A673 (cell line): ENCODE measurements at regions of chr5 and their contacts with region 1.

Region 1: DNA sequence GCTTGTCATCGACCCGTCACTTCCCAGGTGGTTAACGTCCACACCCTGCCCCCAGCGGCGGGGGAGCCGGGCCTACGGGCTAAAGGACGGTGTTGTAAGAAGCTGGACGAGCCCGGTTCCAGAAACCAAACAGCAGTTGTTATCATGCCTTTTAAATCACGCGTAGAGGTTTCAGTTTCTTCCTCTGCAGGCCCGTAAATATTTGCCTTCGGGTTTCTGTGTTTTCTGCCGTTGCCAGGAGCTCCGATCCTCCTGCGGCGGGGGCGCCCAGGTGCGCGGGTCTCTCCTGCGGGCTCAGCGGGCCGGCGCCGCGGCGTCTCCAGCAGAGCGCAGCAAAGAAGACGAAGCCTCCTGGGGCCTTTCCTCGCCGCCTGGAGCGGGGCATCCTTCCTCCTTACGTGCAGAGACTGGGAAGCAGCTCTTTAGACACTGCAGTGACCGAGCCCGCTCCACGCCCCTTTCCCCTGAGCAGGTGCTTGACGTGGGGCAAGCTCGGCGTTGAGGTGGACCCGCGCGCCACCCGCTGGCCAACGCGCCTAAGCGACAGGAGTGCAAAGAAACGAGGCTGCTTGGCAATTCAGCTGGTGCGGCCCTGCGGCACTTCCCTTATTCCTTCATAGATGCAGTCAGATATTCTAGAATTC is 21.8 kb upstream of the TTC1 start:
- DNase-seq: peak; percentile 56
- H3K4me3 ChIP-seq: peak overlapping the region; percentile 39
- H3K27ac ChIP-seq: no peak overlapping the region
- H3K4me1 ChIP-seq: no peaks in the 10 kb centered on the region
- H3K27me3 ChIP-seq: peaks cover 33% of the 10 kb centered on the region
- CTCF ChIP-seq: peak; percentile 70

Region 2: GRCh38 chr5:159444441-159445082 is 542.6 kb before region 1 on chr5:
- CTCF ChIA-PET with region 1: interaction called, 3 read pairs
- POLR2A ChIA-PET with region 1: no interaction called
- intact Hi-C with region 1: loop called (anchors 1 kb)
- DNase-seq: peak; percentile 51
- H3K4me3 ChIP-seq: no peak overlapping the region
- H3K27ac ChIP-seq: no peak overlapping the region
- H3K4me1 ChIP-seq: no peaks in the 10 kb centered on the region
- H3K27me3 ChIP-seq: no peaks in the 10 kb centered on the region
- CTCF ChIP-seq: peak; percentile 40; the same call in 1 of the 2 replicates

Region 3: GRCh38 chr5:159515909-159516415 is 471.2 kb before region 1 on chr5:
- CTCF ChIA-PET with region 1: no interaction called
- POLR2A ChIA-PET with region 1: no interaction called
- intact Hi-C with region 1: loop called (anchors 10 kb)
- DNase-seq: peak; percentile 48
- H3K4me3 ChIP-seq: no peak overlapping the region
- H3K27ac ChIP-seq: no peak overlapping the region
- H3K4me1 ChIP-seq: no peaks in the 10 kb centered on the region
- H3K27me3 ChIP-seq: no peaks in the 10 kb centered on the region
- CTCF ChIP-seq: peak; percentile 82

Region 4: DNA sequence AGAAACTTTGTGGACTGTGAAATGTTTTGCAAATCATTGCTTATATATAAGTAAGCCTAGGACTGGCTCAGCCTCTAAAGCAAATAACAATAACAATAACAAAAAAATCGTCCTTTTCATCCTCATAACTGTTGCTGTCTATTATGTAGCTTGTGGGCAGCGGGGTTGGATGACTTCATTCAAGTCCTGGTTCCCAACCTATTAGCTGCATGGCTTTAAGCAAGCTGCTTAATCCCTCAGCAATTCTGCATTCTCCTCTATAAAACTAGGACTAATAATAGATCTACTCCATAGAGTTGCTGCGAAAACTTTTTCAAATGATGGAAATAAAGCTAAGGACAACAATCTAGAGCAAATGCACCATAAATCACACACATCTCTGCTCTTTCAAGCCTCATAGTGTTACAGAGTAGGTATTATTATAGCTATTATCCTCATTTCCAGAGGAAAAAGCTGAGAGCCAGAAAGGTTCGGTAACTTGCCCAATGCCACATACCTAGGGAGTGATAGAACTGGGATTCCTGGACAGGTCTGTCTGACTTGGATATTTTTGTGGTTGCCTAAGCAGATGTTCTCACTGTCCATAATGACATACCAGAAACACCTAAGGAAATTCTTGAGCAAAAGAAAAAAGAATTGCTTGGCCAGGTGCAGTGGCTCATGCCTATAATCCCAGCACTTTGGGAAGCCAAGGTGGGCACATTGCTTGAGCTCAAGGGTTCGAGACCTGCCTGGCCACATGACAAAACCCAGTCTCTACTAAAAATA is 169.7 kb before region 1 on chr5:
- CTCF ChIA-PET with region 1: no interaction called
- POLR2A ChIA-PET with region 1: no interaction called
- intact Hi-C with region 1: no loop called
- DNase-seq: no peak
- H3K4me3 ChIP-seq: no peak overlapping the region
- H3K27ac ChIP-seq: no peak overlapping the region
- H3K4me1 ChIP-seq: no peaks in the 10 kb centered on the region
- H3K27me3 ChIP-seq: peaks cover 2% of the 10 kb centered on the region
- CTCF ChIP-seq: no peak

Region 5: GRCh38 chr5:159874263-159874662 is 112.9 kb before region 1 on chr5:
- CTCF ChIA-PET with region 1: no interaction called
- POLR2A ChIA-PET with region 1: no interaction called
- intact Hi-C with region 1: no loop called
- DNase-seq: no peak
- H3K4me3 ChIP-seq: no peak overlapping the region
- H3K27ac ChIP-seq: no peak overlapping the region
- H3K4me1 ChIP-seq: peaks cover 6% of the 10 kb centered on the region
- H3K27me3 ChIP-seq: no peaks in the 10 kb centered on the region
- CTCF ChIP-seq: no peak

Region 6: DNA sequence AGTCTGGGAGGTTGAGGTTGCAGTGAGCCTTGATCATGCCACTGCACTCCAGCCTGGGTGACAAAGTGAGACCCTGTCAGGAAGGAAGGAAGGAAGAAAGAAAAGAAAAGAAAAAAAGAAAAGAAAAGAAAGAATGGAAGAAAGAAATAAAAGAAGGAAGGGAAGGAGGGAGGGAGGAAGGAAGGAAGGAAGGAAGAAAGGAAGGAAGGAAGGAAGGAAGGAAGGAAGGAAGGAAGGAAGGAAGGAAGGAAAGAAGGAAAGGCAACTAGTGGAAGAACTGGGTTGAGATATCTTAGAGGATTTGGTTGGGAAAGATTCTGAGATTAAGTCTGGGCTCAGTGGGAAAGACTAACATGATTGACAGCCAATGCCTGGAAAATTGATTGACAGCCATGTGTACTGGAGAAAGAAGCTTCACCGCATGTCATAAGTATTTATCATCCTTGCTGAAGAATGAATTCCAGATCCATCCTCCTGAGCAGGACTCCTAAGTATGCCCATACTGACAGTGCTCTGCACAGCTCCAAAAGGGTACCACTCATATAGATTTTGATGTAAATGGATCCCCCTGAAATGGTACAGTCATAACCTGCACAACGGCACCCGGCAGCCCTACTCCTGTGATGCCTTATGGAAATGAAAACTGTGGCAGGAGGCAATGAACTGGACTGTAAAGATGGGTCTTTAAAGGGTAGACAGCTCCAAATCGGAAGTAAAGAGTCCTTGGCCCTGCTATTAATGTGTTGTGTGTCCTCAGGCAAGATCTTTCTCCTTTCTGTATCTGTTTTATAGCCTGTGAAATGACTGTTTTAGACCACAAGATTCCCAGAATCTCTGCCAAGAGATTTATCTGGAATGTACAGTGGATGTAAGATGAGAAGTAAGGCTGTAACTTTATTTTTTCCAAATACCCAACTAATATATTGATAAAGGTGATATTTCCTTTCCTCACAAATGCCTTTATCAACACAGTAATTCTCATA is 87.8 kb before region 1 on chr5:
- CTCF ChIA-PET with region 1: no interaction called
- POLR2A ChIA-PET with region 1: no interaction called
- intact Hi-C with region 1: no loop called
- DNase-seq: no peak
- H3K4me3 ChIP-seq: no peak overlapping the region
- H3K27ac ChIP-seq: no peak overlapping the region
- H3K4me1 ChIP-seq: no peaks in the 10 kb centered on the region
- H3K27me3 ChIP-seq: no peaks in the 10 kb centered on the region
- CTCF ChIP-seq: no peak